ENCODE measurements at regions of chr2 and their contacts with region 1.

Region 1: GRCh38 chr2:163735685-163736432 is at the start of gene FIGN:
- DNase-seq: peak; percentile 89
- ATAC-seq: peak; percentile 87
- total RNA-seq, gene FIGN: 16.6 TPM

Region 2: DNA sequence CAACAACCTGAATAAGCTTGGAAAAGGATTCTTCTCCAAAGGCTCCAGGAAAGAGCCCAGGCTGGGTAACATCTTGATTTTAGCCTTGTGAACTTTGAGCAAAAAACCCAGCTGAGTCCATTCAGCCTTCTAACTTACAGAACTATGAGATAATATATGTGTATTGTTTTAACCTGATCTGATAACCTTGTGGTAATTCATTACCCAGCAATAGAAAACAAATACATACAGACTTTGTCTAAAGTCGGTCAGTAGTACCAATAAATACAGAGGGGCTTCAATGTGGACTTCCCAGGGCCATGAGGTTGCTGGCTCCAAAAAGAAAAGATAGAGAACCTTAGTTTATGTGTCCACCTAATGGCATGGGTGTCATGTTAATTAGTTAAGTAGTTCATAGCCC is 1089.1 kb before region 1 on chr2:
- intact Hi-C with region 1: no loop called
- DNase-seq: no peak
- ATAC-seq: no peak

Region 3: GRCh38 chr2:164055623-164056022 is 319.8 kb after region 1 on chr2:
- intact Hi-C with region 1: loop called (anchors 10 kb)
- DNase-seq: no peak
- ATAC-seq: no peak